HEK293 (cell line): ENCODE measurements at regions of chr22 and their contacts with region 1.

Region 1: GRCh38 chr22:26511857-26512793 is at the start of gene TFIP11:
- H3K4me3 ChIP-seq: peak within 1 kb of the TSS; percentile 80
- H3K27ac ChIP-seq: peak within 1 kb of the TSS; percentile 56; the same call in 1 of the 2 replicates
- H3K4me1 ChIP-seq: no peaks in the 10 kb centered on the region
- CTCF ChIP-seq: peak; percentile 88

Region 2: GRCh38 chr22:26109686-26110315 is 402.3 kb before region 1 on chr22:
- CTCF ChIA-PET with region 1: no interaction called
- POLR2A ChIA-PET with region 1: no interaction called
- H3K4me3 ChIP-seq: no peak overlapping the region
- H3K27ac ChIP-seq: no peak overlapping the region
- H3K4me1 ChIP-seq: no peaks in the 10 kb centered on the region
- CTCF ChIP-seq: no peak

Region 3: DNA sequence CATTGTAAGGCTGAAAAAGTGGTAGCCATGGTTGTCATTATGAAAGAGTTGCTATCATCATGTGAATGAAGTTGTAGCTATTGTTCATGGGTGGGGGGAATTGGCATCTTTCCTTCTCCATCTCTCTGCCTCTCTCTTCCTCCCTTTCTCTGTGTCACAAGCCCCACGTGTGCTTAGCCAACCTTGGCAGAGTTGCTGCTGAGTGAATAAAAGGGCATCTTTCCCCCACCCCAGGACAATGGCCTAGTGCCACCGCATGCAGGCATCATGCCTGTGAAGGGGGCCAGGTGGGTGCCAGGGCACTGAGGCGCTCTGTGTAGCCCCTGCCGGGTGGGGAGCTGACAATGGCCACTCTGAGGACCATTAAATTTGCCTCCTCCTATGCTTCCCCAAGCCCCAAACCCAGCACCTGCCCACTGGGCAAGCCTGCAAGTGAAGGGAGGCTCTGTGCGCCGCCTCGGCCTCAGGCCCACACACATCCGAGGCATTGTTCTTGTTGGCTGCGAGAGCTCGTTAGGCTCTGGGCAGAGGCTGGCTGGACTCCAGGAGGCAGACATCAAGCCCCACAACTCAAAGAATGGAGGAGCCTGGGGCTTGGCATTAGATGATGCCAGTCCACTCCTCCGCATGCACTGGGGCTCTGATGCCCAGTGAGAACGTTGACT is 239.0 kb before region 1 on chr22:
- CTCF ChIA-PET with region 1: no interaction called
- POLR2A ChIA-PET with region 1: no interaction called
- H3K4me3 ChIP-seq: no peak overlapping the region
- H3K27ac ChIP-seq: no peak overlapping the region
- H3K4me1 ChIP-seq: no peaks in the 10 kb centered on the region
- CTCF ChIP-seq: no peak

Region 4: GRCh38 chr22:26542831-26543230 is 30.7 kb after region 1 on chr22:
- CTCF ChIA-PET with region 1: no interaction called
- POLR2A ChIA-PET with region 1: interaction called, 10 read pairs
- H3K4me3 ChIP-seq: no peak overlapping the region
- H3K27ac ChIP-seq: no peak overlapping the region
- H3K4me1 ChIP-seq: no peaks in the 10 kb centered on the region
- CTCF ChIP-seq: no peak

Region 5: DNA sequence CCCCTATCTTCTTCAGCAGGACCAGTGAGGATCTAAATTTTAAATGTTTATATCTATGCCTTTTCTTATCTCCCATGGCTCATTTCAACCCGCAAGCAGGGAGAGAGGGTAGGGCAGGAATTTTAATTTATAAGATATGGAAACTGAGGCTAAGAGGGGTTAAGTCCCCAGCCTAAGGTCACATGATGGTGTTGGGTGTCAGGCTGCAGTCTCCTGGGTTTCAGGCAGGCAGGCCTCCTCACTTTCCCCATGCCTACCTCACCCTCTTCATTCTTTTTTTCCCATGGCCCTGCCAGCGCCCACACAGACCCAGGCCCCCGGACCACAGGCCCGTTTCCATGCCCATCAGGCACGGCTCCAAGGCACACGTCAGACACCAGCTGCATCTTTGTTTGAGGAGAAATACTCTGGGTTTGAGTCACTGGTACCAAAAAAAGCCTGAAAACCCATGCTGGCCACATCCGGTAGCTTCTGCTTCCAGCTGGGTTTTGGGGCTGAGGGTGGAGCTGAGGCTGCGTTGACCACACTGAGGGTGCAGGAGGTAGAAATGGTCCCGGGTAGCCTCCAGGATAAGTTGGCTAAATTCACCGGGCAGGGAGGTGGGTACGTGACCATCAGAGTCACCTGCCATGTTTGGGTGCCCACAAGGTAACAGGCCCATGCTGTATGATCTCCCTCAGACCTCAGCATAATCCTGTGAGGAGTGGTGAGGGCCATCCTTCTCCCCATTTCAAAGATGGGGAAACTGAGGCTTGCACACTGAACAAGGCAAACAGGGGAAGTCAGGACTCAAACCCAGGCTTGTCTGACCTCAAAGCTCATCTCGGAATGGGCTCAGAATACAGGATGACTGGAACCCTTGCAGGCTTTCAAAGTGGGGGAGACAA is 98.2 kb after region 1 on chr22:
- CTCF ChIA-PET with region 1: no interaction called
- POLR2A ChIA-PET with region 1: no interaction called
- H3K4me3 ChIP-seq: no peak overlapping the region
- H3K27ac ChIP-seq: no peak overlapping the region
- H3K4me1 ChIP-seq: no peaks in the 10 kb centered on the region
- CTCF ChIP-seq: no peak